ENCODE measurements at regions of chr6 and their contacts with region 1.

Region 1: GRCh38 chr6:31680840-31681671 is at the start of gene LY6G5C:
- DNase-seq: peak; percentile 82 to 91
- ATAC-seq: peak; percentile 90 to 96 (median 94)
- H3K4me3 ChIP-seq: peak within 1 kb of the TSS; percentile 70
- H3K27ac ChIP-seq: peak within 1 kb of the TSS; percentile 13
- H3K4me1 ChIP-seq: peaks cover 8% of the 10 kb centered on the region
- H3K27me3 ChIP-seq: no peaks in the 10 kb centered on the region
- CTCF ChIP-seq: peak; percentile 71
- total RNA-seq, gene LY6G5C: 0.75 to 3.2 (median 2.3) TPM

Region 2: GRCh38 chr6:31729515-31729978 is 48.5 kb after region 1 on chr6:
- intact Hi-C with region 1: no loop called
- DNase-seq: peak; percentile 89 to 94
- ATAC-seq: peak; percentile 70 to 85 (median 75)
- H3K4me3 ChIP-seq: peak overlapping the region; percentile 72
- H3K27ac ChIP-seq: peak overlapping the region; percentile 73
- H3K4me1 ChIP-seq: peaks cover 14% of the 10 kb centered on the region
- H3K27me3 ChIP-seq: peaks cover 0 to 6% (median 0%) of the 10 kb centered on the region in 3 donors
- CTCF ChIP-seq: no peak

Region 3: DNA sequence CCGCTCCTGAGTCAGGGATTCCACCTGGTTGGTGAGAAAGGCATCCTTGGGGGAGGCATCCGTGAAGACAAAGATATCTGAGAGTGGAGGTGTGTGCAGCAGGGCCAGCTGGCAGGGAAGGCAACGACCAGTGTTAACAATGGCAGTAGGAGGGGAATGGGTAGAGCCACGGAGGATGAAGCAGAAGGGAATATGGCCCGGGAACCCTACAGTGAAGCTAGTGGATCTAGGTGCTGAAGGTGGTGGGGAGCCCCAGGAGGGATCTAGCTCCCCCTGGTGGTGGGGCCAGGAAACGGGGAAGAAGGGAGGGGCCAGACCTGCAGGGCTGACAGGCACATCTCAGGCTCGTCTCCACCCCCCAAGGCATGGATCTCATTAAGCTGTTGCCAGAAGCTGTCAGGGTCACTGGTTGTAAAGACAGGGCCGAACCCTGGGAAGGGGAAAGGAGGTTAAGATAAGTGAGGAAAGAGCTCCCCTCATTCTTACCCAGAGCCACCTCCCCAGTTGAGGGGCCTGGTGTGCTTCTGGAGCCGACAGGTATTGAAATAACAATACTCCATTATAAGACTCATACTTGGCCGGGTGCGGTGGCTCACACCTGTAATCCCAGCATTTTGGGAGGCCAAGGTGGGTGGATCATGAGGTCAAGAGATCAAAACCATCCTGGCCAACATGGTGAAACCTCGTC is 88.8 kb after region 1 on chr6:
- intact Hi-C with region 1: loop called (anchors 2 to 5 kb)
- DNase-seq: peak; percentile 73 to 88
- ATAC-seq: peak; percentile 82 to 85 (median 84)
- H3K4me3 ChIP-seq: no peak overlapping the region
- H3K27ac ChIP-seq: no peak overlapping the region
- H3K4me1 ChIP-seq: no peaks in the 10 kb centered on the region
- H3K27me3 ChIP-seq: no peaks in the 10 kb centered on the region
- CTCF ChIP-seq: peak; percentile 87

Region 4: DNA sequence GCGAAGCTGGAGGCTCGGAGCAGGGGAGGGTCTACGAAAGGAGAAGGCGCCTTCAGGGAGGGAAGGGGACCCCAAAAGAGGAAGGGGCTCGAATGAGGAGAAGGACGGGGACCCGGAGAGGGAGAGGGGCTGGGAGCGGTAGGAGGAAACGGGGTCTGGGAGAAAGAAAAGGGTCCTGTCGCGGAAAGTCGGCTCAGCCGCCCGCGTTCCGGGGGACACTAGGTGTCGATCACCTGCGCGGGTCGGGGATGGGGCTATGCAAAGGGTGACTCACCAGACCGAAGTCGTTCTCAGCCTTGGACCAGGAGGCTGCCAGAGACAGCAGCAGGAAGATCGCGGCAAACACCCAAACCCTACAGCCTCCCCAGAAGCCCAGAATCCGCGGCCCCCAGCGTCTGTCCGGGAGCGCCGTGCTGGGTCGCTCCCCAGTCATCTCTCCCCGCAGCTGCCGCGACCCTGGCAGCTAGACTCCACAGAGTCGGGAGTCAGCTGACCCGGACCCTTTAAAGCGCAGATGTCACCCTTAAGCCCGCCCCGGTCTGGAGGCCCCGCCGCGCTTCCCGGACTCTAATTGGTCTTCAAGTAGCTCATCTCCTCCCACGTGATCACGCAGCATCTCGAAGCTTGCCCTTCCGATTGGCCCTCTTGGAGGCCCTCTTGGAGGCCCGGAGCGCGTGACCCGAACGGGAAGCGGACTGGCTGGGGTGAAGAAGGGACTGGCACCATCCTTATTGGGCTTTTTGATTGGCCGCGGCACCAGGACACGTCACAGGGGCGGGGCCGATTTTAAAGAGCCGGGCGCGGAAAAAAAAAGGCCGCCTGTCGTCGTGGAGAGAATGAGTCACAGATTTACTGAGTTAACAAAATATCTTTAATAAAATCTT is 181.5 kb after region 1 on chr6 and contains the start of gene NEU1:
- intact Hi-C with region 1: loop called in 1 of 2 experiments (anchors 10 kb)
- DNase-seq: peak; percentile 100
- ATAC-seq: peak; percentile 97 to 98 (median 98)
- H3K4me3 ChIP-seq: peak within 1 kb of the TSS; percentile 89
- H3K27ac ChIP-seq: peak within 1 kb of the TSS; percentile 91
- H3K4me1 ChIP-seq: peaks cover 9% of the 10 kb centered on the region
- H3K27me3 ChIP-seq: no peaks in the 10 kb centered on the region
- CTCF ChIP-seq: no peak
- total RNA-seq, gene NEU1: 14.2 to 20.6 (median 18.6) TPM

Region 5: GRCh38 chr6:31888276-31889258 is 207.5 kb after region 1 on chr6:
- intact Hi-C with region 1: loop called in 1 of 2 experiments (anchors 10 kb)
- DNase-seq: no peak
- ATAC-seq: peak; percentile 31 to 60 (median 38)
- H3K4me3 ChIP-seq: no peak overlapping the region
- H3K27ac ChIP-seq: no peak overlapping the region
- H3K4me1 ChIP-seq: no peaks in the 10 kb centered on the region
- H3K27me3 ChIP-seq: no peaks in the 10 kb centered on the region
- CTCF ChIP-seq: peak; percentile 55

Region 6: GRCh38 chr6:31952140-31952805 is 271.2 kb after region 1 on chr6:
- intact Hi-C with region 1: loop called (anchors 5 kb)
- DNase-seq: peak; percentile 66 to 79
- ATAC-seq: peak; percentile 68 to 86 (median 72)
- H3K4me3 ChIP-seq: no peak overlapping the region
- H3K27ac ChIP-seq: no peak overlapping the region
- H3K4me1 ChIP-seq: peaks cover 1% of the 10 kb centered on the region
- H3K27me3 ChIP-seq: no peaks in the 10 kb centered on the region
- CTCF ChIP-seq: peak; percentile 72

Region 7: DNA sequence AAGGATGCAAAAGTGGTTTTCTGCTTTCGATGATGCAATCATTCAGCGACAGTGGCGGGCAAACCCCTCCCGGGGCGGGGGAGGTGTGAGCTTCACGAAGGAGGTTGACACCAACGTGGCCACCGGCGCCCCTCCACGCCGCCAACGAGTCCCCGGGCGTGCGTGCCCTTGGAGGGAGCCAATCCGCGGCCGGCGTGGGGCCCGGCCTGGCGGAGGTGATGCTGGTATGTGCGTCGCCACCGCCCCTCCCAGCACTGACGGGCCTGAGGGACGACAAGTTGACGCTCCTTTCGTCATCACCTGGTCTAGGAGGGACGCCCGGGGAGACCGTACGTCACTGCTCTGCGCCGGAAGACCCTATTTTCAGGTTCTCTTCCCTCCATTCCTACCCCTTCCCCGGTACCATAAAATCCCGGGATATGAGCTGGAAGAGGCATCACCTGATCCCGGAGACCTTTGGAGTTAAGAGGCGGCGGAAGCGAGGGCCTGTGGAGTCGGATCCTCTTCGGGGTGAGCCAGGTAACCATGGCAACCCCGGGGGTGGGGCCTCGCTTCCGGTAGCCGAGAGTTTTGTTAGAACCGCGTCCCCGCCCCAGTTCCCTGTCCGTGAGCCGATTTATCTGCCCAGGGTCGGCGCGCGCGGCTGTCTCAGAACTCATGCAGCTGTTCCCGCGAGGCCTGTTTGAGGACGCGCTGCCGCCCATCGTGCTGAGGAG is 291.1 kb after region 1 on chr6 and contains the start of gene DXO:
- intact Hi-C with region 1: no loop called
- DNase-seq: peak; percentile 96 to 97
- ATAC-seq: peak; percentile 95 to 96 (median 96)
- H3K4me3 ChIP-seq: peak within 1 kb of the TSS; percentile 95
- H3K27ac ChIP-seq: peak within 1 kb of the TSS; percentile 96
- H3K4me1 ChIP-seq: peaks cover 19% of the 10 kb centered on the region
- H3K27me3 ChIP-seq: no peaks in the 10 kb centered on the region
- CTCF ChIP-seq: no peak
- total RNA-seq, gene DXO: 7.4 to 12.9 (median 9.9) TPM

Measured in psoas muscle (tissue), 8 donors.